ENCODE measurements at regions of chr1 and their contacts with region 1.

Region 1: DNA sequence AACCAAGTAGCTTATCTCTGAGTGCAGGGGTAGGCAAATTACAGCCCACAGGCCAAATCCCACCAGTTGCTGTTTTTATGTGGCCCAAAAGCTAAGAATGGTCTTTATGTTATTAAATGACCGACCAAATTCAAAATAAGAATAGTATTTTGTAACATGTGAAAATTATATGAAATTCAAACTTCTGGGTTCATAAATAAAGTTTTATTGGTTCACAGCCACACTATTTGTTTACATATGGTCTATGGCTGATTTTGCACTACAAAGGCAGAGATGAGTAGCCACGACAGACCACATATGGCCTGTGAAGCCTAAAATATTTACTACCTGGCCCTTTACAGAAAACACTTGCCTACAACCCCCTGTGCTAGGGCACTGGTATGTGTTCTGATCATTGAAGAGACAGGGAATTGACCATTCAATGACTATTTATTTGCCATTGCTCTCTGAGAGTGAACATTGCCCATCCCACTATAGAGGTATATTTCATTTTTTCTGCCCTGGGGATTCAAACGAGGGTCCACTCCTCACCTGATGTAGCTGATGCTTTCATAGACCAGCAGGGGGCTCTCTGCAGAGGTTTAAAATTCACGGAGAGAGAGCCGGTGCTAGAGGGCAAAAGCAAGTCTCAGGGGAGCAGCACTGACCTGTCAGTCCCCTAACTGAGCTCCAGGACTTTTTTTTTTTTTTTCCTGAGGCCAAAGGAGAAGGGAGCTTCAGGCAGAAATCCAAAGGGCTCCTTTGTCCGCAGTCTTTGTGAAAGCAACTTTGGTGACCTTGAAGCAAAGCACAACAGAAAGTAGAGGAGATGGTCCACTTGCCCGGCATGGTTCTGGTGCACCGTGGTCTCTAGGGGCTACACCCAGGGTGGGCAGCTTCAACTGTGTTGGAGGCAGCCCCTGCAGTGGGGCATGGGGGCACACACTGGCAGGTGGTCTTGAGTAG is 7.3 kb upstream of the GNL2 start:
- DNase-seq: no peak
- H3K4me3 ChIP-seq: no peak overlapping the region
- CTCF ChIP-seq: peak; percentile 59

Region 2: DNA sequence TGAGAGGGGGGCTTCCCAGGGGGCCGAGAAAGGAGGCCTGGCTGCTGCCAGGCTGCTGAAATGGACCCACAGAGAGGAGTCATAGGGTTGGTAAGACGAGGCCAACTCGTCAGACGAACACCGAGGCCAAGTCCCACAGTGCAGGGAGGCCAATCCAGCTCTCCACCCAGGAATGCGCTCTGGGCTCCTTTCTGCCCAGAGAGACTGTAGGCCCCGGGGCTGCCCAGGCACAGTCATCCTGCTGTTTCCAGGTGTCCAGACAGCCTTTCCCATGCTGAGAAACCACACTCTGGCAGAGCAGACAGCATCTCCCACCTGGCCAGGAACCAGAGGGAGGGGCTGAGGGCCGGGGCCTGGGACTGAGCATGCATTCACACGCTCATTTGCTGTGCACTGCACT is 58.4 kb after region 1 on chr1:
- CTCF ChIA-PET with region 1: interaction called, 14 read pairs
- POLR2A ChIA-PET with region 1: no interaction called
- DNase-seq: no peak
- H3K4me3 ChIP-seq: no peak overlapping the region
- CTCF ChIP-seq: no peak

Measured in AG04449 (cell line).